Body of pancreas (tissue), 4 donors: ENCODE measurements at regions of chr10 and their contacts with region 1.

Region 1: DNA sequence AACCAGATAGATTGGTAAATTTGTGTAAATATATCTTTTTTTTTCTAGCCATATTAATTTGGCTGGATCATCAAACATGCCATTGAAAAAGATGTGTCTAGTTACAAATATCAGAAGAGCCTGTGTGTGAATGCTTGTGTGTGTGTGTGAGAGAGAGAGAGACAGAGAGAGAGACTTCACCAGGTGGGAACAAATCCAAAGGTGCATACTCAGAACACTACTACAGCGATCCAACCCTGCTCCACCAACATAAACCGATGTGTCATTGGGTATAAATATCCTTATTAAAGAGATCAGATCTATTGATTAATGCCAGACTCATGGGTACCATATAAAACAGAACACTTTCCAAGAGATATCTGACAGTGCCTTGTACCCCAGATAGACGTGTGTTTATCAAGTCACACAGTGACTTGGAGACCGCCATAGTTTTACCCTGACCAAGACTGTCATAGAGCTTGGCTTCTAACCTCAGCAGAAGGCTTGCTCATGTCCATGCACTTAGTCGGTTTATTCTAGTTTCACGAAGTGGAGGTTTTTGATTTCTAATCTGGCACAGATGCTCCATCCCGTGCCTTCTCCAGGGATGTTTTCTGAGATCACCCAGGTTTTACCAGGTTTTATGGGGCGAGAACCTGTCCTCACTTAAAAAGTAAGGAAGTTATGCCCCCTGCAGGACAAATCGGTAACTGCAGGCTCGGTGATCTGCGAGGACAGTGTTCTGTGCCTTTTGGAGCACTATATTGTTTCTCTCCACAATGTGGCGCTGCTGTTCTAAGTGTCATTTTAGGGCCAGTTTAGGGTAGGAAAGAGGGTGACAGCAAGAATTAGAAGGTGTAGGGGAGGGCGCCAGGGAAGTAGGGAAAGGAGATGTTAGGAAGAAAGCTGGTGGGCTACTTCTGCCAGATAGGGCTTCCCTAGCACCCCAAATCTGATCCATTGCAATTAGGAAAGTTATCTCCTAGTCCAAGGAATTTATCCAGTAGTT is 29.3 kb upstream of the WNT8B start:
- DNase-seq: peak; percentile 95 to 99 (median 97)
- ATAC-seq: peak; percentile 96
- H3K4me3 ChIP-seq: no peak overlapping the region
- H3K27ac ChIP-seq: no peak overlapping the region
- H3K4me1 ChIP-seq: no peaks in the 10 kb centered on the region
- H3K27me3 ChIP-seq: no peaks in the 10 kb centered on the region
- CTCF ChIP-seq: peak; percentile 97 to 100 (median 99)
- POLR2A ChIP-seq: no peak

Region 2: DNA sequence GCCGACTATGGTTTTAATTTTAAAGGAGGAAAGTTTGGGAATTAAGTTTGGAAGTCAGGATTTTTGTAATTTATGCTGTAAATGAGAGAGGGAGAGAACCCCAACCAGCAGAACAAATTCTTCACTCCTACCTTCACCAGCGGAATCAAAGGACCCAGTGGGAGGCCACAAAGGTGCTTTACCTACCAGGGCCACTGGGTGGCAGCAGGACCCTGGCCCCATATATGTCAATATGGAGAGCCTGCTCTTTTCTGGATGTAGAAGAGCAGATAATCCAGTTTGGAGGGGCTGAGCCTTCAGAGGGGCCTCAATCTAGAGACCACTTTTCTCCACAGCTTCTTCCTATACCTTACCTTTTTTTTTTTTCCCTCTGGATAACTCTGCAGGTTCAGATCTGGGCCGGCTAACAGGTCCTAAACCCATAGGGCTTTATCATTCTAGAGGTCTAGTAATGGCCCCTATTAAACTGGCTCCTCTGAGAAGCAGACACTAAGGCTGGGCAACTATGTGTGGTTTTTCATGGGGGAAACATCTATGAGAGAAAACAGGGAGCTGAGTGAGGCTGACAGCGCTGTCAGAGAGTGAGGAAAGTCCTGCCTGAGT is 95.0 kb before region 1 on chr10:
- intact Hi-C with region 1: loop called (anchors 2 kb)
- DNase-seq: peak; percentile 79 to 87 (median 82)
- ATAC-seq: peak; percentile 79
- H3K4me3 ChIP-seq: no peak overlapping the region
- H3K27ac ChIP-seq: no peak overlapping the region
- H3K4me1 ChIP-seq: no peaks in the 10 kb centered on the region
- H3K27me3 ChIP-seq: no peaks in the 10 kb centered on the region
- CTCF ChIP-seq: peak; percentile 84 to 96 (median 89)
- POLR2A ChIP-seq: no peak

Region 3: DNA sequence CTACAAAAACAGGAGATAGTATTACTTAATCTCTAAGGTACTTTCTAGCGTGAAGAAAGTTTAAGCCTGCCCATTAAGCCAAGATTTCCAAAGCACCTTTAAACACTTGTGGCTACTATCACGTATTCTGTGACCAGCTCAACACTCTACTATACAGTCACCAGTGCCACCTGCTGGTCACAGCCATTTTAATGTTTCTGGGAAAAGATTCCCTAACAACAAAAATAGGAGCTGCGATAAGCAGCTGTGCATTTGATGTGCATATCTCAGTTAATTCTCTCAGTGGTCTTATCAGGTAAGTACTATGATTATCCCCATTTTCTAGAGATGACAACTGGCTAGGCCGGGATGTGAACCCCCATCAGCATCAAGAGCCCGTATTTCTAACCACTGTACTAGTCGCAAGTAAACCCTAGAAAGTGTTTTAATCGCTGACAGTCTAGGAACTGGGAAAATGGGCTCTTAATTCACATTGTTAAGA is 85.3 kb after region 1 on chr10:
- intact Hi-C with region 1: loop called (anchors 5 kb)
- DNase-seq: peak; percentile 74 to 88 (median 82)
- ATAC-seq: peak; percentile 88
- H3K4me3 ChIP-seq: no peak overlapping the region
- H3K27ac ChIP-seq: no peak overlapping the region
- H3K4me1 ChIP-seq: peaks cover 13% of the 10 kb centered on the region
- H3K27me3 ChIP-seq: no peaks in the 10 kb centered on the region
- CTCF ChIP-seq: peak; percentile 52 to 90 (median 73)
- POLR2A ChIP-seq: no peak